CD14-positive monocyte (primary cell): ENCODE measurements at regions of chr2 and their contacts with region 1.

Region 1: GRCh38 chr2:10448208-10448645 is at the start of gene ODC1:
- DNase-seq: peak; percentile 86 to 92 (median 91)
- H3K4me3 ChIP-seq: peak within 1 kb of the TSS; percentile 50 to 74 (median 58)
- H3K4me3 Mint-ChIP-seq: peak within 1 kb of the TSS; percentile 72 to 94
- H3K27ac ChIP-seq: peak within 1 kb of the TSS; percentile 75 to 83
- H3K27ac Mint-ChIP-seq: peak within 1 kb of the TSS; percentile 69 to 88 (median 82)
- H3K4me1 ChIP-seq: peaks cover 36 to 50% of the 10 kb centered on the region in 2 donors
- H3K4me1 Mint-ChIP-seq: peaks cover 40% of the 10 kb centered on the region
- H3K27me3 ChIP-seq: no peaks in the 10 kb centered on the region
- H3K27me3 Mint-ChIP-seq: no peaks in the 10 kb centered on the region
- CTCF ChIP-seq: no peak
- polyA plus RNA-seq, gene ODC1: 22.7 to 27.3 (median 23.6) TPM

Region 2: GRCh38 chr2:9951272-9951972 is 496.8 kb before region 1 on chr2 and contains the start of gene GRHL1:
- intact Hi-C with region 1: loop called (anchors 10 kb)
- DNase-seq: peak; percentile 88 to 90 (median 90)
- H3K4me3 ChIP-seq: peak within 1 kb of the TSS; percentile 38 to 78 (median 65)
- H3K4me3 Mint-ChIP-seq: peak within 1 kb of the TSS; percentile 83 to 91
- H3K27ac ChIP-seq: no peak within 1 kb of the TSS
- H3K27ac Mint-ChIP-seq: peak within 1 kb of the TSS in 3 of 7 donors; percentile 50 to 76 (median 75)
- H3K4me1 ChIP-seq: peaks cover 9 to 13% of the 10 kb centered on the region in 2 donors
- H3K4me1 Mint-ChIP-seq: peaks cover 13% of the 10 kb centered on the region
- H3K27me3 ChIP-seq: peaks cover 38 to 60% of the 10 kb centered on the region in 2 donors
- H3K27me3 Mint-ChIP-seq: peaks cover 55 to 76% (median 66%) of the 10 kb centered on the region in 3 donors
- CTCF ChIP-seq: no peak
- polyA plus RNA-seq, gene GRHL1: 0.08 TPM in 1 of 3 donors, not detected in the others